Esophagus muscularis mucosa (tissue), 4 donors: ENCODE measurements at regions of chr12 and their contacts with region 1.

Region 1: DNA sequence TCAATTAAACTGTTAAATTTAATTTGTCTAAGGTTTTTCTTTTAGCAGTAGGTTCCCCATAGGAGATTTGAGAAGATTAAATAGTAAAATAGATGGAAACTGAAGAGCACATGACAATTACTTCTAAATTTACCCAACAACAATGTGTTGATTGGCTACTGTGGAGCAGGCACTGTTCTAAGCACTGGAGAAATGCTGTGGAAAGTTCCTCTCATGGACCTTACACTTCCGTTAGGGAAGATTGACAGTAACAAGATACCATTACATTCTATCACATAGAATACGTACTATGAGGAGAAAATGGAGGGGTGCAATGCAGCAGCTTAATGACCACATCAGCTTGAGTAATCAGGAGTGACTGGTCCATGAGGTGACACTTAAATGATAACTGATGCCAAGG is 8.1 kb upstream of the STAB2 start:
- DNase-seq: peak; percentile 8
- H3K4me3 ChIP-seq: no peak overlapping the region
- H3K27ac ChIP-seq: no peak overlapping the region
- H3K4me1 ChIP-seq: peaks cover 2 to 18% (median 8%) of the 10 kb centered on the region in 4 donors
- H3K27me3 ChIP-seq: no peaks in the 10 kb centered on the region
- CTCF ChIP-seq: no peak
- EP300 ChIP-seq: no peak
- POLR2A ChIP-seq: no peak

Region 2: DNA sequence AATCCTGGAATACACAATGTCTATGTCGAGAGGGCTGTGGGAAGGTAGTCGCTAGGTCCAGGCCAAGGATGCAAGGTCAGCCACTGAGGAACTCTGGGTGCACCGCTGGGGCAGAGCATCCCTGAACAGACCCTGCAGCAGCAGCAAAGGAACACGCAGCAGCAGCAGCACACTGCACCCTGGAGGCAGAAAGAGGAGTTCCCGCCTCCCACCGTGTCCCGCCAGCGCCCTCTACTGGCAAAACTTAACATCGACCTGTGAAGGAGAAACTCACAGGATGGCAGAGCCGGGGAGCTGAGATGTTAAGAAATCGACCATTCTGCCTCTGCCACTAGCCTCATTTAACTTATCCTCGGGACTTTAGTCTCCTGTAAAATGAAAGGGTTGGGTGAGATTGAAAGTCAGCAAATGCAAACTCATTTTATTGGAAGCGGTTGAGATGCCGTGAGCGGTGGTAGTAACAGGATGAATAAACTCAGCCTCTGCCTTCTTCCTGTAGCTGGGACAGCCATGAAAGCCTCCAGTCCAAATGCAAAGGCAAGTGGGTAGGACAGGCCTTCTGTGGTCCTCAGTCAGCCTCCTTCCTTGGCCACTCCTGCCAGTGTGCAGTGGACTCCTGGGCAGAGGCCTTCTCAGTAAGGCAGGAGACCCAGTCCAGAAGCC is 53.8 kb after region 1 on chr12:
- intact Hi-C with region 1: loop called (anchors 5 kb)
- DNase-seq: no peak
- H3K4me3 ChIP-seq: no peak overlapping the region
- H3K27ac ChIP-seq: no peak overlapping the region
- H3K4me1 ChIP-seq: peaks cover 1 to 16% (median 8%) of the 10 kb centered on the region in 4 donors
- H3K27me3 ChIP-seq: no peaks in the 10 kb centered on the region
- CTCF ChIP-seq: peak; percentile 43 to 59 (median 43)
- EP300 ChIP-seq: no peak
- POLR2A ChIP-seq: no peak